ENCODE measurements at regions of chr2 and their contacts with region 1.

Region 1: GRCh38 chr2:67486041-67486796 is 89.1 kb downstream of the ETAA1 start:
- DNase-seq: no peak

Region 2: GRCh38 chr2:67516899-67517530 is 30.8 kb after region 1 on chr2:
- intact Hi-C with region 1: loop called in 1 of 2 experiments (anchors 1 kb)
- DNase-seq: no peak

Region 3: DNA sequence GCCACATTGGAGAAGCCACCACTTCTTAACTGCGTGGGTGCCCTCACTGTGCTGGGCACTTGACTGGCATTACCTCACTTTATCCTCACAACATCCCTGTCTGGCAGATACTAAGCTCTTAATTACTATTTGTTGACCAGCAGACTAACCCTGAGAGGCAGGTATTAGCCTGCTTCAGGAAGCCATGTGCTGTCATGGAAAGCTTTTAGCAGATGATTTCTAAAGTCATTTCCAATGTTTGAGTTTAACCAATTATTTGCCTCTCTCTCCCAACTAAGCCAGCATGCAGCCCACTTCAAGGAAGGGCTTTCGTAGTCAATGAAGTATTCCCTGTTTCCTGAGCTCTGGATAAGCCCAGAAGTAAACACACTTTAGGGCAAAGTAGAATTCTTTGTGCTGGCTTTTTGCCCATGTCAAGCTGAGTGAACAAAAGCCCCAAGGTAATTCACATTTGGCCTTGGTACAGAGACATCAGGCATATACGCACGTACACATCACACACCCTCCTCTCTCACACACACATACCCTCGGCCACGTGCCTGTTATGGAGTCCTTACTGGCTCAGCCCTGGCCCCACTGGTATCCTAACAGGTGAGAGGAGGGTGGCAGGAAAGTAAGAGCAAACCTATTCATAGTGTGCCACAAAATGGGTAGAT is 468.0 kb after region 1 on chr2:
- intact Hi-C with region 1: no loop called
- DNase-seq: no peak